CD4-positive, alpha-beta T cell (primary cell): ENCODE measurements at regions of chr1 and their contacts with region 1.

Region 1: DNA sequence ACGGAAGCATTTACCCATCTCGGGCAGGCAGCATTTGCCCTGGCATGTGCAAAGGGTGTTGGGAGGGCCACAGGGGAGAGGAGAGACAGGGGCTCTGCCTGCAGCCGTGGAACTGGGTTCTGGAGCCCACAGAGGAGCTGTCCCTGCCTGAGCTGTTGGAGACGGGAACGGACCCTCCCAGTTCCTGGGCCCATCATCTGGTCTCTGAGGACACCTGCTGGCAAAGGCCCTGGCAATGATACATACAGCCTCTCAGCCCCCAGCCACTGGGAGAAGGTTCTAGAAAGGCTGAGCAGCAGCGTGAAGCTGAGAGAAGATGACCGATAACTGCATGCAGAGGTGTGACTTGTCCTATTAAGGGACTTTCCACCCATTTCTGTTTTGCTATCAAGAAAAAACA is 31.4 kb downstream of the FAAP20 start:
- DNase-seq: peak in 1 of 14 experiments; percentile 19
- ATAC-seq: no peak
- H3K4me3 ChIP-seq: no peak overlapping the region
- H3K4me3 Mint-ChIP-seq: no peak overlapping the region
- H3K27ac ChIP-seq: no peak overlapping the region
- H3K27ac Mint-ChIP-seq: no peak overlapping the region
- H3K4me1 ChIP-seq: no peaks in the 10 kb centered on the region
- H3K4me1 Mint-ChIP-seq: peaks cover 7% of the 10 kb centered on the region
- H3K27me3 ChIP-seq: no peaks in the 10 kb centered on the region
- H3K27me3 Mint-ChIP-seq: no peaks in the 10 kb centered on the region
- CTCF ChIP-seq: no peak

Region 2: DNA sequence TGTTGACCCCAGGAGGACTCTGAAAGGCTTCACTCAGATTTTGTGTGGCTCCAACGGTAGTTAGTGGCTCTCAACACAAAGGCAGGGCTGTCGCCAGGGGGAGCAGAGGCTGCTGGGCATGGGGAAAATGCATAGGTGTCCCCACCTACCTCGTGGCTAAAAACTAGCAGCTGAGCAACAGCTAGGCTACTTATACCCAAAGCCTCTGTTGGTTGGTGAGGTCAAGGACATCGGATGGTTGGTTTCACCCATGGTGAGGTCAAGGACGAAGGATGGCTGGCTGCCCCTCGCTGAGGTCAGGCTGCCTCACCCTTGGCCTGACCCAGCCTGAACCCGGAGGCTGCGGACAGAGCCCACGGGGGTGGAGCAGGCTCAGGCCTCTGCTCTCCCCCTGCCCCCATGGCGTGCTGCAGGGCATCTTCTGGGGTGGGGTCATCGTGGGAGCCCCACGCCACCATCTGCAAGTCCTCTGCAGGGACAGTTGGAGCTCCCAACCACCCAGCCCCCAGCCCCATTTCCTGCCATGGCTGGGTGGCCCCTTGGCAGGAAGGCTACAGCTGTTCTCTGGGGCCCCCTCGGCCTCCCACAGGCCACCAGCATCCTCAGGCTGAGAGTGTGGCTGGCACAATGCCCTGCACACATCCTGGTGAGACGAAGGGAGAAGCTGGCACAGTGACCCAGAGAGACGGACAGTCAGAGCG is 263.8 kb before region 1 on chr1:
- CTCF ChIA-PET with region 1: no interaction called
- POLR2A ChIA-PET with region 1: no interaction called
- intact Hi-C with region 1: no loop called
- DNase-seq: peak in 3 of 14 experiments; percentile 36 to 56 (median 53)
- ATAC-seq: peak; percentile 49
- H3K4me3 ChIP-seq: no peak overlapping the region
- H3K4me3 Mint-ChIP-seq: no peak overlapping the region
- H3K27ac ChIP-seq: no peak overlapping the region
- H3K27ac Mint-ChIP-seq: no peak overlapping the region
- H3K4me1 ChIP-seq: peaks cover 35% of the 10 kb centered on the region
- H3K4me1 Mint-ChIP-seq: peaks cover 18% of the 10 kb centered on the region
- H3K27me3 ChIP-seq: no peaks in the 10 kb centered on the region
- H3K27me3 Mint-ChIP-seq: peaks cover 3% of the 10 kb centered on the region
- CTCF ChIP-seq: no peak

Region 3: DNA sequence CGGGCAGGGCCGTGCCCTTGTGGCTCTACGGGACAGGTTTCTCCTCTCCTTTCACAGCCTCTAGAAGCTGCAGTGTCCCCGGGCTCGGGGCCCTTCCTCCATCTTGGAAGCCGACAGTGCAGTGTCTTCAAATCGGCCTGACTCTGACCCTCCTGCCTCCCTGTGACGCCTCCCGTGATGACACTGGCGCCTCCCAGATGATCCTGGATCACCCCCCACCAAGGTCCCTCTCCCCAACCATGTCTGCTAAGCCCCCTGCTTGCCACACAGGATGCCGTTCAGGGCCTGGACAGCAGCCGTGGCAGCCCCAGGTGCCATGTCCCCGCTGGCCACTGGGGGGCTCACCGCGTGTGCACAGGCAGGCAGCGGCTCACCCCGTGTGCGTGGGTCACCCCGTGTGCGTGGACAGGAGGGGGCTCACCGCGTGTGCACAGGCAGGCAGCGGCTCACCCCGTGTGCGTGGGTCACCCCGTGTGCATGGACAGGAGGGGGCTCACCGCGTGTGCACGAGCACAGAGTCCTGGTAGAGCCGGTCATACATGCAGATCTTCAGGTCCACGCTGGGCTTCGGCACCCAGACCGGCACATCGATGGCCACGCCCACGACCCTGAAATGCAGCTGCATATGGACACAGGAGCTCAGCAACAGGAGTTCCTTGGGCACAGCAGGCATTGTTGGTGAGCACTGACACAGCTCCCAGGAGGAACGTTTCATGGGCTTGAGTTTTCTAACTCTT is 219.2 kb before region 1 on chr1:
- CTCF ChIA-PET with region 1: no interaction called
- POLR2A ChIA-PET with region 1: no interaction called
- intact Hi-C with region 1: loop called in 1 of 2 experiments (anchors 5 kb)
- DNase-seq: peak; percentile 36 to 75 (median 54)
- ATAC-seq: peak; percentile 99
- H3K4me3 ChIP-seq: no peak overlapping the region
- H3K4me3 Mint-ChIP-seq: no peak overlapping the region
- H3K27ac ChIP-seq: no peak overlapping the region
- H3K27ac Mint-ChIP-seq: no peak overlapping the region
- H3K4me1 ChIP-seq: peaks cover 10% of the 10 kb centered on the region
- H3K4me1 Mint-ChIP-seq: no peaks in the 10 kb centered on the region
- H3K27me3 ChIP-seq: no peaks in the 10 kb centered on the region
- H3K27me3 Mint-ChIP-seq: peaks cover 5% of the 10 kb centered on the region
- CTCF ChIP-seq: peak; percentile 82